ENCODE measurements at regions of chr5 and their contacts with region 1.

Region 1: GRCh38 chr5:78467752-78468357 is 107.4 kb downstream of the SCAMP1 start:
- DNase-seq: peak; percentile 42 to 70 (median 69)
- H3K4me3 ChIP-seq: no peak overlapping the region
- H3K27ac ChIP-seq: no peak overlapping the region
- H3K4me1 ChIP-seq: no peaks in the 10 kb centered on the region
- H3K27me3 ChIP-seq: no peaks in the 10 kb centered on the region

Region 2: GRCh38 chr5:78483809-78484521 is 16.1 kb after region 1 on chr5:
- CTCF ChIA-PET with region 1: interaction called, 10 read pairs
- POLR2A ChIA-PET with region 1: no interaction called
- DNase-seq: peak; percentile 91 to 97 (median 95)
- H3K4me3 ChIP-seq: peak overlapping the region in 3 of 7 experiments; percentile 39 to 56 (median 44)
- H3K27ac ChIP-seq: peak overlapping the region; percentile 46 to 73
- H3K4me1 ChIP-seq: peaks cover 56 to 71% (median 63%) of the 10 kb centered on the region in 4 experiments
- H3K27me3 ChIP-seq: no peaks in the 10 kb centered on the region

Region 3: DNA sequence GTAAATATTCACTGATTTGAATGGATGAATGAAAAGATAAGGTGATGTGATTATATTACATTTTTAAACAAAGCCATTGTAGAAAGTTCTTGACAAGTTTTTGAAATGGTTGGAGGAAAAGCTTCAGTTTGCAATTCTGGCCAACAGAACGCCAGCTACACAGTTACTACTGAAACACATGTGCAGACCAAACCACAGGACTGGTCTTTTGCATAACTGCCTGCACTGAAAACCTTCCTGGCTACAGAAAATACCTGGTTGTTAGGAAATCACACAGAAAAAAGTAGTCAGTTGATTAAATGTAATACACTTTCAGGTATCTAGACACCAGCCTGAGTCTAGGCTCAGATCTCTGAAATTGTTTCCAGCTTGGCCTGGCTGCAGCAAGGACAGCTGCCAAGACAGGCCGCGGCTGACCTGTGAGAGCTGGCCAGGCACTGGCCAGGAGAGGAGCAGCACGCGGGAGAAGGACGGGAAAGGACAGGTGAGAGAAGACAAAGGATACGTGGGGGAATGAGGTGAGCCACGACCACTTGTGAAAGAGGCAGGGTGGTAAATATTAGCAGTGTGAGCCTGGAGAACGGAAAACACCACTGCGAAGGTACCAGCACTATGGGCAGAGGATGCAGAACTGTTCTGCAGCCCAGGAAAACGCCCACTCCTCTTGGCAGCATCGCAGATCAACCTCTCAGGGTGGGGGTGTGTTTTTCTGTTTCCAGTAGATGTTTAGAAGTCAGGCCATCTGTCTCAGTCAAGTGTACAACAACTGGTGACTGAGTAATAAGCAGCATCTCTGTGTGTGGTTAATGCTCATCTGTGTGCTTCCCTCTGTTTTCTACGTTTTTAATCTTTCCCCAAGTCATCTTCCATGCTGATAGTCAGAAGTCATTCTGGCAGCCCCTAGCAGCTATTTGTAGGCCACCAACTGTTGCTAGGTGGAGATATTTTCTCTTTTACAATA is 30.0 kb after region 1 on chr5:
- CTCF ChIA-PET with region 1: interaction called, 10 read pairs
- POLR2A ChIA-PET with region 1: interaction called, 3 read pairs
- DNase-seq: peak in 2 of 3 donors; percentile 80 to 86
- H3K4me3 ChIP-seq: peak overlapping the region in 2 of 7 experiments; percentile 4 to 48
- H3K27ac ChIP-seq: peak overlapping the region; percentile 48 to 74
- H3K4me1 ChIP-seq: peaks cover 47 to 100% (median 72%) of the 10 kb centered on the region in 4 experiments
- H3K27me3 ChIP-seq: no peaks in the 10 kb centered on the region

Region 4: GRCh38 chr5:78519198-78519941 is 51.5 kb after region 1 on chr5:
- CTCF ChIA-PET with region 1: interaction called, 10 read pairs
- POLR2A ChIA-PET with region 1: no interaction called
- DNase-seq: no peak
- H3K4me3 ChIP-seq: no peak overlapping the region
- H3K27ac ChIP-seq: no peak overlapping the region
- H3K4me1 ChIP-seq: no peaks in the 10 kb centered on the region
- H3K27me3 ChIP-seq: no peaks in the 10 kb centered on the region